Body of pancreas (tissue), 4 donors: ENCODE measurements at regions of chr11 and their contacts with region 1.

Region 1: GRCh38 chr11:59611570-59612565 is 3.7 kb downstream of the OSBP start:
- DNase-seq: peak; percentile 70 to 88 (median 78)
- ATAC-seq: peak; percentile 2
- H3K4me3 ChIP-seq: no peak overlapping the region
- H3K27ac ChIP-seq: peak overlapping the region; percentile 50 to 82 (median 67)
- H3K4me1 ChIP-seq: peaks cover 52% of the 10 kb centered on the region
- H3K27me3 ChIP-seq: no peaks in the 10 kb centered on the region
- CTCF ChIP-seq: peak in 1 of 7 experiments; percentile 22
- POLR2A ChIP-seq: peak in 2 of 3 donors; percentile 48 to 49

Region 2: DNA sequence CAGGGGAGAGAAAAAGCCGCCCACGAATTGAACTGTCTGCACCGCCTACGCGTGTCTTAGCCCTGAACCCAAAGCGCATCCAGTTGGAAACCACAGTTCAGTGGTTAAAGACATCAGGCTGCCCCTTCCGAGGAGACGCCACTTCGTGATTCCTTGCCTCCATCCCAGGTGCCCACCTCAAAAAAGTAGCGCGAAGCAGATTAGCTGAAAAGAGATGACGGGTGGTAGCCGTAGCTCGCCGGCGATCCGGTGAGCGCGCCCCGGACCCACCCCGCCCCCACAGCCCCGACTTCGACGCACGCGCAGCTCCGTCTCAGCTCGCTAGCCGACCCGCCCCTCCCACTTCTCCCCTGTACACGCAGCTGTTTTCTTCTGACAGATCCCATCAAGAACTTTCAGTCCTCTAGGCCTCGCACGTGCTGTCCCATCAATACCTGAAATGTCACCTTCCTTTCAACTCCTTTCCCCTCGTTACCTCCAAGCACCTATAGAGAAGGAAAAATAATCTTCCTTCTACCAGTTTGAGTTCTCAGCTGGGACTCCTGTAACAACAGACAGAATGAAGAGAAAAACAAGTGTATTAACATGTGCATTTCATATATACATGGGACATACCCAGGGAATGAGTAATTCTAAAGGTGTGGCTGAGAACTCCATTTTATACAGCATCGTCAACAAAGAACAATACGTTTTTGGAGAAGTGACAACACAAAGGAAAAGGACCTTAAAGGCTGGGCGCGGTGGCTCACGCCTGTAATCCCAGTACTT is 51.0 kb before region 1 on chr11:
- intact Hi-C with region 1: loop called (anchors 5 kb)
- DNase-seq: peak; percentile 87 to 91 (median 90)
- ATAC-seq: peak; percentile 85
- H3K4me3 ChIP-seq: peak overlapping the region; percentile 11 to 55
- H3K27ac ChIP-seq: peak overlapping the region; percentile 70 to 87 (median 82)
- H3K4me1 ChIP-seq: peaks cover 21% of the 10 kb centered on the region
- H3K27me3 ChIP-seq: no peaks in the 10 kb centered on the region
- CTCF ChIP-seq: no peak
- POLR2A ChIP-seq: peak in 1 of 3 donors; percentile 61

Region 3: DNA sequence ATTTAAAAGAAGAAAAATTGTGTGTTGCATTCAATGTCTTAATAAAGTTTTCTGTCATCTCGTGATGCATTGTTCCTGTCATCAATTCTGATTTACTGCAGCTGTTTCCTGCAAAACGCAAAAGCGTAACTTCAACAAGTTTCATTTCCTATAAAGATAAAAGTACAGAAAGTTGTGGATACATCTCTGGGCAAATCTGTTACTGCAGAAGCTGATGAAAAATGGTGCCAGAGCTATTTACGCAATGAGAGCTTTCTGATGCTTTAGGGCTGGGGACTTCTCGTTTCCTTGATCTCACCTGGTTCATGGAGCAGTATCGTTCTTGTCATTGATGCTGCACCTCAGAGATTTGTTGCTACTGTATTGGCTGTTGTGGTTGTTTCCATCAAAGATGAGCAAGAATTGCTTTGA is 865.2 kb after region 1 on chr11:
- intact Hi-C with region 1: no loop called
- DNase-seq: peak in 1 of 4 donors; percentile 32
- ATAC-seq: no peak
- H3K4me3 ChIP-seq: no peak overlapping the region
- H3K27ac ChIP-seq: no peak overlapping the region
- H3K4me1 ChIP-seq: no peaks in the 10 kb centered on the region
- H3K27me3 ChIP-seq: no peaks in the 10 kb centered on the region
- CTCF ChIP-seq: no peak
- POLR2A ChIP-seq: no peak